Heart right ventricle (tissue), 16 donors: ENCODE measurements at regions of chr15 and their contacts with region 1.

Region 1: DNA sequence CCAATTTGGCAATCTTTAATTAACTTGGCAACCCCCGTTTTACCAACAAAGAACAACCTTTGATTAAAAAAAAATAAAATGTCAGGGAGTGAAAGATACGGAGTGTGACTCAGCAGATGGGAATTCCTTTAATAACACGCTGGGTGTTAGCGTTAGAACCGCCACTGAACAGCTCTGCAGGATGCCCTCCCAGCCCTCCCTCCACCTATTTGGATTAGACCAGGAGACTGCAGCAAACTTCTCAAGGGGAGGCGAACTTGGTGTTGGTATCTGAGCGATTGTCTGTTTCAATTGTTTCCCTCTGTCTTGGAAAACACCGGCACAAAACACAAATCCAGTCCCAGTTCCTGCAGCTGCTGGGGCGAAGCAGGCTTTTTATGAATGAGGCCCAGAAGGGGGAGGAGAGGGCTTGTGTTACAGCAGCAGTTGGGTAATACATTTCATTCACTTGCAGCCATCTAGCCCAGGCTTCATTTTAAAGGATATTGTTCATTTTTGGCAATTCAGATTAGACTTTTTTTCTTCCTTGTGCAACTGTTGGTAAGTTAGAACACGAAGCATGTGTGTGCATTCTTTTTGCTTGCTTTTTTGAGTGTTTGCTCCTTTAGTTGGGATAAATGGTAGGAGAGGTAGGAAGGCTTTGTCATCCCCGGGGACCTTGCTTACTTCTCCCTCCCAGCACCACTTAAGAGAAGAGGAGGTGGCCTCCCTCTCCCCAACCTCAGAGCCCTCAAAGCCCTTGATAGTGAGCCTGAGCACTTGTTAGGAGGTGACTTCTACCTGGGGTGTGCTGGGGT is 152.3 kb downstream of the IGF1R start:
- DNase-seq: peak; percentile 24 to 51
- ATAC-seq: peak; percentile 81 to 92 (median 86)
- H3K4me3 ChIP-seq: peak overlapping the region in 3 of 10 donors; percentile 6 to 18 (median 8)
- H3K27ac ChIP-seq: peak overlapping the region in 8 of 10 donors; percentile 31 to 72 (median 56)
- H3K4me1 ChIP-seq: peaks cover 21 to 67% (median 39%) of the 10 kb centered on the region in 9 donors
- H3K27me3 ChIP-seq: no peaks in the 10 kb centered on the region
- CTCF ChIP-seq: no peak

Region 2: DNA sequence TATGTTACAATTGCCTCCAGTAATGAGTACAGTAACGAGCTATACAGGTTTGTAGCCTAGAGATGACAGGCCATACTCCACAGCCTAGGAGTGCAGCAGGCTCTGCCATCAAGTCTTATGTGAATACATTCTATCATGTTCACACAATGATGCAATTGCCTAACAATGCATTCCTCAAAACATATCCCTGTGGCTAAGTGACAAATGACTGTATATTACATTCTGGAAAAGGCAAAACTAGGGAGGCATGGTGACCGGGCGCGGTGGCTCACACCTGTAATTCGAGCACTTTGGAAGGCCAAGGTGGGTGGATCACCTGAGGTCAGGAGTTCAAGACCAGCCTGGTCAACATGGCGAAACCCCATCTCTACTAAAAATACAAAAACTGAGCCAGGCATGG is 344.7 kb before region 1 on chr15:
- intact Hi-C with region 1: no loop called
- DNase-seq: no peak
- ATAC-seq: no peak
- H3K4me3 ChIP-seq: no peak overlapping the region
- H3K27ac ChIP-seq: no peak overlapping the region
- H3K4me1 ChIP-seq: no peaks in the 10 kb centered on the region
- H3K27me3 ChIP-seq: peaks cover 0 to 4% (median 0%) of the 10 kb centered on the region in 7 donors
- CTCF ChIP-seq: no peak

Region 3: GRCh38 chr15:98838397-98839259 is 38.0 kb after region 1 on chr15:
- intact Hi-C with region 1: loop called in 3 of 10 experiments (anchors 5 kb)
- DNase-seq: no peak
- ATAC-seq: no peak
- H3K4me3 ChIP-seq: no peak overlapping the region
- H3K27ac ChIP-seq: no peak overlapping the region
- H3K4me1 ChIP-seq: peaks cover 0 to 49% (median 22%) of the 10 kb centered on the region in 9 donors
- H3K27me3 ChIP-seq: no peaks in the 10 kb centered on the region
- CTCF ChIP-seq: no peak